ENCODE measurements at regions of chr18 and their contacts with region 1.

Region 1: GRCh38 chr18:13831864-13832508 is 8.0 kb downstream of the MC5R start:
- DNase-seq: peak; percentile 7
- H3K4me3 ChIP-seq: no peak overlapping the region
- H3K27ac ChIP-seq: no peak overlapping the region
- H3K4me1 ChIP-seq: no peaks in the 10 kb centered on the region
- H3K27me3 ChIP-seq: peaks cover 28% of the 10 kb centered on the region
- CTCF ChIP-seq: 0 out of 2 replicates have a peak, but pooled peaks have one; percentile 21

Region 2: GRCh38 chr18:13513021-13513420 is 319.0 kb before region 1 on chr18:
- CTCF ChIA-PET with region 1: no interaction called
- POLR2A ChIA-PET with region 1: no interaction called
- intact Hi-C with region 1: no loop called
- DNase-seq: no peak
- H3K4me3 ChIP-seq: no peak overlapping the region
- H3K27ac ChIP-seq: no peak overlapping the region
- H3K4me1 ChIP-seq: no peaks in the 10 kb centered on the region
- H3K27me3 ChIP-seq: no peaks in the 10 kb centered on the region
- CTCF ChIP-seq: no peak

Region 3: GRCh38 chr18:13868501-13869271 is 36.7 kb after region 1 on chr18:
- CTCF ChIA-PET with region 1: no interaction called
- POLR2A ChIA-PET with region 1: no interaction called
- intact Hi-C with region 1: loop called (anchors 5 kb)
- DNase-seq: no peak
- H3K4me3 ChIP-seq: no peak overlapping the region
- H3K27ac ChIP-seq: no peak overlapping the region
- H3K4me1 ChIP-seq: no peaks in the 10 kb centered on the region
- H3K27me3 ChIP-seq: peaks cover 67% of the 10 kb centered on the region
- CTCF ChIP-seq: no peak

Region 4: GRCh38 chr18:13893418-13893760 is 61.4 kb after region 1 on chr18:
- CTCF ChIA-PET with region 1: no interaction called
- POLR2A ChIA-PET with region 1: no interaction called
- intact Hi-C with region 1: loop called (anchors 10 kb)
- DNase-seq: no peak
- H3K4me3 ChIP-seq: no peak overlapping the region
- H3K27ac ChIP-seq: no peak overlapping the region
- H3K4me1 ChIP-seq: peaks cover 40% of the 10 kb centered on the region
- H3K27me3 ChIP-seq: no peaks in the 10 kb centered on the region
- CTCF ChIP-seq: no peak